MCF 10A (cell line): ENCODE measurements at regions of chr12 and their contacts with region 1.

Region 1: GRCh38 chr12:83793616-83794015 is 1106.9 kb downstream of the TMTC2 start:
- DNase-seq: peak; percentile 47
- H3K4me3 Mint-ChIP-seq: no peak overlapping the region
- H3K27ac Mint-ChIP-seq: no peak overlapping the region
- H3K4me1 Mint-ChIP-seq: no peaks in the 10 kb centered on the region
- H3K27me3 Mint-ChIP-seq: no peaks in the 10 kb centered on the region
- CTCF ChIP-seq: no peak

Region 2: GRCh38 chr12:83261998-83262397 is 531.6 kb before region 1 on chr12:
- CTCF ChIA-PET with region 1: no interaction called
- POLR2A ChIA-PET with region 1: no interaction called
- intact Hi-C with region 1: no loop called
- DNase-seq: no peak
- H3K4me3 Mint-ChIP-seq: no peak overlapping the region
- H3K27ac Mint-ChIP-seq: no peak overlapping the region
- H3K4me1 Mint-ChIP-seq: no peaks in the 10 kb centered on the region
- H3K27me3 Mint-ChIP-seq: no peaks in the 10 kb centered on the region
- CTCF ChIP-seq: no peak

Region 3: DNA sequence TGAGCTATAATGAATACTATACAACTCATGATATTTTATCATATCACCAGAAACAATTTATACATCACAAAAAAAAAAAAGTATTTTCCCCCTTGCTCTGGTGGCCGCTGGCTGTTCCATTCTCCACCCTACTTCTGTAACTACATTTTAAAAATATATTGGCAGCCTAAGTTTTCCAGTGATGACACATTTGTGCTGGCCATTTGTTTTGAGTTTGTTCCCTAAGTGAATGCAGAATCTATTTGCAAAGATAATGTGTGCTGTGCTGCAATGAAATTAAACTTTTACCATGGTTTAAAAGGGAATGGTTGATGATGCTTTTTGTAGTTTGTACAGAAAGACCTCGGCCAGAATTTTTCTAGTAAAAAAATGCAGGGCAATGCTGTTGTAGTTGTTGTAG is 14.1 kb before region 1 on chr12:
- CTCF ChIA-PET with region 1: no interaction called
- POLR2A ChIA-PET with region 1: no interaction called
- intact Hi-C with region 1: loop called (anchors 2 kb)
- DNase-seq: no peak
- H3K4me3 Mint-ChIP-seq: no peak overlapping the region
- H3K27ac Mint-ChIP-seq: no peak overlapping the region
- H3K4me1 Mint-ChIP-seq: no peaks in the 10 kb centered on the region
- H3K27me3 Mint-ChIP-seq: no peaks in the 10 kb centered on the region
- CTCF ChIP-seq: no peak